ENCODE measurements at regions of chr14 and their contacts with region 1.

Region 1: DNA sequence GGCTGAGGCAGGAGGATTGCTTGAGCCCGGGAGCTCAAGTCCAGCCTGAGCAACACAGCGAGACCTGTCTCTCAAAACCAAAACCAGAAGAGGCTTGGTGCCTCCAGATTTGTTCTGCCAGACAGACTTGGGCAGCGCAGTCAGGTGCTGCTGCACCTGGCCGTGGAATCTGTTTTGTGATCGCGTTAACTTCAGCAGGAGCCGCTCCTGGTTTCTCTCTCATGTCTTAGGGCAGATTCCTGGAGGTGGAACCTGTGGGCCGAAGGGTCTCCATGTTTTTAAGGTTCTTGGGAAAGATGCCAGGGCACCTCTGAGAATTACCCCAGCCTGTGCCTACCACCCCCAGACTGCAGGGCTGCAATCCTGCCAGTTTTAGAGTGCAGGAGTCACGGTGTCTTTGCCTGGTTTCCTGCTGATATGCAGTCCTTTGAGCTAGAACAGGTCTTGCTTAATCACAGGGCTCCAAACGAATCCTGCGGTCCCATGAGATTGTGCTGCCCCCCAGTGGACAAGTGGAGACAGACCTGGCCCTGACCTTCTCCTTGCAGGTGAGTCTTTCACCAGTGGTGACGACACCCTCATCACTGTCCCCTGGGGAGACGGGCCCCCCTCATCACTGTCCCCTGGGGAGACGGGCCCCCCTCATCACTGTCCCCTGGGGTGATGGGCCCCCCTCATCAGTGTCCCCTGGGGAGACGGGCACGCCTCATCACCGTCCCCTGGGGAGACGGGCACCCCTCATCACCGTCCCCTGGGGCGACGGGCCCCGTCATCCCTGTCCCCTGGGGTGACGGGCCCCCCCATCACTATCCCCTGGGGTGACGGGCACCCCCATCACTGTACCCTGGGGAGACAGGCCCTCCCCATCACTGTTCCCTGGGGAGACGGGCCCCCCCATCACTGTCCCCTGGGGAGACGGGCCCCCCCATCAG is 37.6 kb downstream of the PACS2 start:
- DNase-seq: peak; percentile 79 to 95
- H3K4me3 ChIP-seq: no peak overlapping the region
- H3K27ac ChIP-seq: no peak overlapping the region
- H3K4me1 ChIP-seq: peaks cover 0 to 12% (median 5%) of the 10 kb centered on the region in 4 experiments; a peak in 5 of 7 replicates
- H3K27me3 ChIP-seq: no peaks in the 10 kb centered on the region
- CTCF ChIP-seq: peak in 2 of 3 experiments; percentile 92 to 97; a peak in 3 of 4 replicates
- EP300 ChIP-seq: no peak
- POLR2A ChIP-seq: no peak
- RAD21 ChIP-seq: peak; percentile 94 to 95

Region 2: GRCh38 chr14:105187935-105188524 is 164.2 kb before region 1 on chr14:
- CTCF ChIA-PET with region 1: interaction called, 11 read pairs
- POLR2A ChIA-PET with region 1: no interaction called
- DNase-seq: no peak
- H3K4me3 ChIP-seq: no peak overlapping the region
- H3K27ac ChIP-seq: no peak overlapping the region
- H3K4me1 ChIP-seq: peaks cover 0 to 13% (median 0%) of the 10 kb centered on the region in 4 experiments; a peak in 1 of 7 replicates
- H3K27me3 ChIP-seq: peaks cover 0 to 2% (median 0%) of the 10 kb centered on the region in 4 experiments; a peak in 2 of 7 replicates
- CTCF ChIP-seq: peak in 2 of 3 experiments; percentile 37 to 41; a peak in 3 of 4 replicates
- EP300 ChIP-seq: no peak
- POLR2A ChIP-seq: no peak
- RAD21 ChIP-seq: peak; percentile 51 to 65

Region 3: DNA sequence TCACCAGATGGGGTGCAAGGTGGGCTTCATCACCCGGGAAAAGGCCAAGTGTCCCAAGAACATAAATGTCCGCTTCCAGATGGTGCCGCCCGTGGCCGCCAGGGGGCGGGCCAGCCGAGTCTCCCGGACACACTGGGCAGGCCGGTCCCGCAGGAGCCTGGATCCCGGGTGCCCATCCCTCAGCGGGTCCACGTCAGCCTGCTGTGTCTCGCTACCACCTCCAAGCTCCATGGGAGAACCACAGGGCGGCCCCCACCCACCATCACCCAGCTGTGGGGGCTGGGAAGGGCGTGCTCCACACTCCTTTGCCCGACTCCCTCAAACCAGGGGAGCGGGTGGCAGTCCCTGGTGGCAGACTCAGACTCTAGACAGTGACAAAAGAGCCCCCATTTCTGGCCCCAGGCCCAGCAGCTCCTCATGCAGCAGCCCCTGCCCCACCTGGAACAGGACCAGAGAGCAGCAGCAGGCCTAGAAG is 149.1 kb before region 1 on chr14:
- CTCF ChIA-PET with region 1: interaction called, 27 read pairs
- POLR2A ChIA-PET with region 1: no interaction called
- DNase-seq: peak; percentile 27 to 91
- H3K4me3 ChIP-seq: peak overlapping the region in 1 of 4 experiments; percentile 29; a peak in 1 of 8 replicates
- H3K27ac ChIP-seq: no peak overlapping the region
- H3K4me1 ChIP-seq: peaks cover 0 to 10% (median 1%) of the 10 kb centered on the region in 4 experiments; a peak in 3 of 7 replicates
- H3K27me3 ChIP-seq: peaks cover 0 to 5% (median 2%) of the 10 kb centered on the region in 4 experiments; a peak in 3 of 7 replicates
- CTCF ChIP-seq: peak in 2 of 3 experiments; percentile 84 to 85; a peak in 3 of 4 replicates
- EP300 ChIP-seq: no peak
- POLR2A ChIP-seq: no peak
- RAD21 ChIP-seq: peak; percentile 65 to 72

Region 4: GRCh38 chr14:105324080-105324778 is 28.0 kb before region 1 on chr14:
- CTCF ChIA-PET with region 1: interaction called, 17 read pairs
- POLR2A ChIA-PET with region 1: no interaction called
- DNase-seq: peak in 1 of 2 experiments; percentile 48
- H3K4me3 ChIP-seq: no peak overlapping the region
- H3K27ac ChIP-seq: no peak overlapping the region
- H3K4me1 ChIP-seq: peaks cover 5 to 39% (median 31%) of the 10 kb centered on the region in 4 experiments
- H3K27me3 ChIP-seq: no peaks in the 10 kb centered on the region
- CTCF ChIP-seq: no peak
- EP300 ChIP-seq: no peak
- POLR2A ChIP-seq: no peak
- RAD21 ChIP-seq: no peak

Region 5: GRCh38 chr14:105333613-105334364 is 18.4 kb before region 1 on chr14:
- CTCF ChIA-PET with region 1: interaction called, 15 read pairs
- POLR2A ChIA-PET with region 1: no interaction called
- DNase-seq: no peak
- H3K4me3 ChIP-seq: no peak overlapping the region
- H3K27ac ChIP-seq: no peak overlapping the region
- H3K4me1 ChIP-seq: peaks cover 2 to 17% (median 8%) of the 10 kb centered on the region in 4 experiments; a peak in 6 of 7 replicates
- H3K27me3 ChIP-seq: no peaks in the 10 kb centered on the region
- CTCF ChIP-seq: no peak
- EP300 ChIP-seq: no peak
- POLR2A ChIP-seq: no peak
- RAD21 ChIP-seq: no peak

Region 6: DNA sequence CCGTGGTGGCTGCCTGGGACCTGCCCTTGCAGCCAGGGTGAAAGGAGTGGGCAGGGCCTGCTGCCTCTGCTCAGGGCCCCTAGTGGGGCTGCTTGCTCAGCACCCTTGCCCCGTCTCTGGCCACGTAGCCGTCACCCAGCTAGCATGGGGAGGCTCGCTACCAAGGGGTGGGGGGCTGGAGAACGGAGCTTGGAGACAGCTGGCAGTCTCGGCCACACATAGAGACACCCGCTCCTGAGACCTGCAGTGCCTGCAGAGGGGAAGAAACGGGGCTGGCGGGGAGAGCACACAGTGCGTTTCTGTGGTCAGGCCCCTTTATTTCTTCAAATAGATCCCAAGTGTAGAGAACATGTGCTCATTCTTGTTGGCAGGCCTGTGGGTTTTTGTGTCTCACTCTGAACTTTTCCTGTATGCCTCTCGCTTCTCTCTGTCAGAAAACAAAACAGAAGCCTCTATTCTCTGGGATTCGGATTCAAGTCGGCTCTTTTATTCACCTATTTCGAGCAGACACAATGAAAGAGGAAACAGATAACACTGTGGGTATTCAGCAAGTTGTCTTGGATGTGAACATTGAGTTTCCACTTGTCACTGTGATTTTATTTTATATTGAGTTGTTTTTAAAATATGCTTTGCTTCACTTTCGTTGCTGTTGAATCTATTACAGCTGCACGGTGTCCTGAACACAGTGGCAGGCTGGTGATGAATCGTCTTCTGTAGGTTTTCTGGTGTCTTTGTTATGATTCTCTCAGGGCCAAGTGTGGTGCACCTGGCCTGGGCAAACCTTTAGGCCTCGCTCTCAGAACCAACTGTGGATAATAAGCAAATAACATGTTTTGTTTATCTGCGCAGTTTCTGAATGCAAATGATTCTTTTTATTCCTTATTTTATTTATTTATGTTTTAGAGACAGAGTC is 11.1 kb before region 1 on chr14:
- CTCF ChIA-PET with region 1: interaction called, 21 read pairs
- POLR2A ChIA-PET with region 1: no interaction called
- DNase-seq: no peak
- H3K4me3 ChIP-seq: no peak overlapping the region
- H3K27ac ChIP-seq: no peak overlapping the region
- H3K4me1 ChIP-seq: peaks cover 0 to 8% (median 1%) of the 10 kb centered on the region in 4 experiments; a peak in 3 of 7 replicates
- H3K27me3 ChIP-seq: no peaks in the 10 kb centered on the region
- CTCF ChIP-seq: no peak
- EP300 ChIP-seq: no peak
- POLR2A ChIP-seq: no peak
- RAD21 ChIP-seq: no peak